ENCODE measurements at regions of chr10 and their contacts with region 1.

Region 1: DNA sequence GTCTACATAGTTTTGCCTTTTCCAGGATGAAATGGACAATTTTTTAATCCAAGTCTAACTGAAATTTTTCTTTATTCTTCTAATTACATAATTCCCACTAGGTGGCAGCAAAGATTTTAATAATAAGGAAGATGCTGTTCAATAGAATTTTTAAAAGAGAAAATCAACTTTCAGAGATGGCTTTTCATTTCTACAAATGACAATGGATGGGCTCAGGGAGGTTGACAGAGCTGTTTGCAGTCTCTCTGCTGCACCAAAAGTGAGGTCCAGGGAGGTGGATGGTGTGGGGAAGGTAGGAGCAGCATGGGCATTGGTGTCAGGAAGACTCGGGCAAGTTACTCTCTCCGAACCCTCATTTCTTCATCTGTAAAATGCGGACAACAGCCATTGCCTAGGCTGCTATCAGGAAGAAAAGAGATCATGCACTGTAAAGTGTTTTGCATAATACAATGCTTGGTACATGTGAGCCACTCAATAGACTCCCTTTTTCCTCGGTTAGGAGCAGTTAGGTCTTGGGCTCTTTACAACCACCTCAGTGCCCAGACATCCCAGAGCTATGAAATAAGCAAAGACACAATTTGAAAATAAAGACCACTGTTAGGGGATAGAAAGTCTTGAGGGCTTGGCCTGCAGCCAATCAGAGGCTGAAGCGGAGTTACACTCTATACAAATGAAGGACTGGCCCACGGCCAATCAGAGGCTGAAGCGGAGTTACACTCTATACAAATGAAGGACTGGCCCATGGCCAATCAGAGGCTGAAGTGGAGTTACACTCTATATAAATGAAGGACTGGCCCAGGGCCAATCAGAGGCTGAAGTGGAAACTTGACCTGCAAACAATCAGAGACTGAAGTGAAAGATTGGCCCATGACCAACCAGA is 107.1 kb downstream of the ABLIM1 start:
- DNase-seq: peak; percentile 32
- ATAC-seq: no peak
- H3K4me3 ChIP-seq: no peak overlapping the region
- H3K27ac ChIP-seq: no peak overlapping the region
- H3K4me1 ChIP-seq: no peaks in the 10 kb centered on the region; a peak in 1 of 4 replicates
- H3K27me3 ChIP-seq: no peaks in the 10 kb centered on the region
- CTCF ChIP-seq: peak; percentile 11 to 95 (median 78); a peak in 4 of 6 replicates
- POLR2A ChIP-seq: no peak
- RAD21 ChIP-seq: peak; percentile 91

Region 2: DNA sequence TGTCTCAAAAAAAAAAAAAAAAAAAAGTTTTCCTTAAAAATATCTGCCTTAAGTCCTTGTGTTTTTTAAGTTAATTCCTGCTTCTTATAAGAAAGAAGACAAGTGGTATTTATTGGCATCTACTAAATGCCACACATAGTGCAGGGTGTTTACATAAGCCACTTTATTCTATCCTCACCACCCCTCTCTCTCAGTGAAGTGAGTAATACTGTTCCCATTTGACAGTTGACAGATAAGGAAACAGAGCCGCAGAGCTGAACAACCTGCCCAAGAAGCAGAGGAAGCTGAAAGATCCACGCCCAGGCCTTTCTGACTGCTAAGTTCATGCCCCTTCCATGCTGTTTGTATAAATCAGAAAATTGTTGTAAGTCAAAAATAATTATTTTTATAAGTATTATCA is 53.0 kb after region 1 on chr10:
- CTCF ChIA-PET with region 1: no interaction called
- POLR2A ChIA-PET with region 1: no interaction called
- RAD21 ChIA-PET with region 1: no interaction called
- intact Hi-C with region 1: no loop called
- DNase-seq: no peak
- ATAC-seq: no peak
- H3K4me3 ChIP-seq: no peak overlapping the region
- H3K27ac ChIP-seq: no peak overlapping the region
- H3K4me1 ChIP-seq: peaks cover 0 to 7% of the 10 kb centered on the region in 2 experiments; a peak in 1 of 4 replicates
- H3K27me3 ChIP-seq: no peaks in the 10 kb centered on the region
- CTCF ChIP-seq: no peak
- POLR2A ChIP-seq: no peak
- RAD21 ChIP-seq: no peak

Region 3: DNA sequence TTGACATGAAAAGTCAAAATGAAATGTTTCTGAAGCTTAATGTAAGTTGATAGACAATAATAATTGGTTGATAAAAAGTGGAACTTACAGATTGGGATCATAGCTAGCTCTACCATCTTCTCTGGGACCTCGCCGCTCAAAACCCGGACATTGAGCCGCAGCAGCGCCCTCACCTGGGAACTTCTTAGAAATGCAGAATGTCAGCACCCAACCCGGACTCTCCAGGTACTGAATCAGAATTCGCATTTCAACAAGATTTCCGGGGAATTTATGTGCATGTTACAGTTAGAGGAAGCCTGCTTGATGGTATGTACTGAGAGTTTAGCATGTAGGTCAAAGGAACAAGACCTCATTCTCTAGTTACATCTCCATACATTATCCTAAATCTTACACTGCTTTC is 143.8 kb after region 1 on chr10:
- CTCF ChIA-PET with region 1: interaction called, 44 read pairs
- POLR2A ChIA-PET with region 1: no interaction called
- RAD21 ChIA-PET with region 1: interaction called, 4 to 8 read pairs
- intact Hi-C with region 1: loop called (anchors 1 kb)
- DNase-seq: peak; percentile 61
- ATAC-seq: peak; percentile 97
- H3K4me3 ChIP-seq: no peak overlapping the region
- H3K27ac ChIP-seq: no peak overlapping the region
- H3K4me1 ChIP-seq: peaks cover 16 to 18% of the 10 kb centered on the region in 2 experiments; a peak in 3 of 4 replicates
- H3K27me3 ChIP-seq: no peaks in the 10 kb centered on the region
- CTCF ChIP-seq: peak; percentile 86 to 97 (median 93)
- POLR2A ChIP-seq: no peak
- RAD21 ChIP-seq: peak; percentile 91

Region 4: DNA sequence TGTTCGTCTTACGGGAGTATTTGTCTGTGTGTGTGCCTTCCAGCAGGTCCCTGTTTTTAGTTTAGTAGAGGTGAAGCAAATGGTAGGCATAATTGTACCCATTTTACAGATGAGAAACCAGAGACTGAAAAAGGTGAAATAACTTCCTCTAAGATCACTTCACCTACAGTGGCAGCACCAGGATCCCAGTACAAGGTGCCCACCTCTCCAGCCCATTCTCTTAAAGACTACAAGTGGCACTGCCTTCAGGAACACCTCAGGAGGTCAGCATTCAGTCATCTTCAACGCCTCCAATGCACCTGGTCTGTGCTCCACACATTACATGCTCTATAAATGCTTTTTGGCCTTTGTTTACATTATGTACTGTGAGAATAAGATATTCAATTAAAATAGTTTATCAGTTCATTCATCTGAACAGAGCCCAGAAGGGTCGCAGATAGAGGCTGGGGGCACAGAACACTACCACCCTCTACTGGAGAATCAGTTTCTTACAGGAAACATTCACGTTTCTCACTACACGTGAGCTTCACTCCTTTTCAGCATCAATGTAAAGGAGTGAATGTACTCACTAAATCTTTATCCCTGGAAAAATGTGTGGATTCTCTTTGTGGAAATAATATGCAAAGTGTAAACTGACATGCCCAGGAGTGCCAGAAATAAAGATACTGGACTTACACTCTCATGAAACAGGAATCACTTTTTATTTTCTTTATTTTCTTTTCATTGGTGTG is 152.5 kb after region 1 on chr10:
- CTCF ChIA-PET with region 1: interaction called, 11 read pairs
- POLR2A ChIA-PET with region 1: no interaction called
- RAD21 ChIA-PET with region 1: interaction called in 1 of 2 experiments, 7 read pairs
- intact Hi-C with region 1: loop called (anchors 1 kb)
- DNase-seq: no peak
- ATAC-seq: peak; percentile 90
- H3K4me3 ChIP-seq: no peak overlapping the region
- H3K27ac ChIP-seq: no peak overlapping the region
- H3K4me1 ChIP-seq: peaks cover 0 to 4% of the 10 kb centered on the region in 2 experiments; a peak in 2 of 4 replicates
- H3K27me3 ChIP-seq: no peaks in the 10 kb centered on the region
- CTCF ChIP-seq: peak; percentile 84 to 95 (median 88)
- POLR2A ChIP-seq: no peak
- RAD21 ChIP-seq: peak; percentile 90

Region 5: GRCh38 chr10:114779803-114780609 is 229.0 kb after region 1 on chr10:
- CTCF ChIA-PET with region 1: interaction called, 43 read pairs
- POLR2A ChIA-PET with region 1: no interaction called
- RAD21 ChIA-PET with region 1: no interaction called
- intact Hi-C with region 1: no loop called
- DNase-seq: peak; percentile 76
- ATAC-seq: peak; percentile 82
- H3K4me3 ChIP-seq: peak overlapping the region in 1 of 2 experiments; percentile 14; a peak in 1 of 4 replicates
- H3K27ac ChIP-seq: peak overlapping the region; percentile 49
- H3K4me1 ChIP-seq: peaks cover 26 to 27% of the 10 kb centered on the region in 2 experiments
- H3K27me3 ChIP-seq: no peaks in the 10 kb centered on the region
- CTCF ChIP-seq: no peak
- POLR2A ChIP-seq: no peak
- RAD21 ChIP-seq: peak; percentile 39; the same call in 1 of the 2 replicates

Region 6: GRCh38 chr10:114876602-114877300 is 325.8 kb after region 1 on chr10:
- CTCF ChIA-PET with region 1: no interaction called
- POLR2A ChIA-PET with region 1: no interaction called
- RAD21 ChIA-PET with region 1: no interaction called
- intact Hi-C with region 1: loop called (anchors 2 kb)
- DNase-seq: peak; percentile 74
- ATAC-seq: peak; percentile 94
- H3K4me3 ChIP-seq: no peak overlapping the region
- H3K27ac ChIP-seq: no peak overlapping the region
- H3K4me1 ChIP-seq: peaks cover 0 to 13% of the 10 kb centered on the region in 2 experiments; a peak in 1 of 4 replicates
- H3K27me3 ChIP-seq: no peaks in the 10 kb centered on the region
- CTCF ChIP-seq: peak; percentile 95 to 97 (median 96)
- POLR2A ChIP-seq: no peak
- RAD21 ChIP-seq: peak; percentile 96

Region 7: DNA sequence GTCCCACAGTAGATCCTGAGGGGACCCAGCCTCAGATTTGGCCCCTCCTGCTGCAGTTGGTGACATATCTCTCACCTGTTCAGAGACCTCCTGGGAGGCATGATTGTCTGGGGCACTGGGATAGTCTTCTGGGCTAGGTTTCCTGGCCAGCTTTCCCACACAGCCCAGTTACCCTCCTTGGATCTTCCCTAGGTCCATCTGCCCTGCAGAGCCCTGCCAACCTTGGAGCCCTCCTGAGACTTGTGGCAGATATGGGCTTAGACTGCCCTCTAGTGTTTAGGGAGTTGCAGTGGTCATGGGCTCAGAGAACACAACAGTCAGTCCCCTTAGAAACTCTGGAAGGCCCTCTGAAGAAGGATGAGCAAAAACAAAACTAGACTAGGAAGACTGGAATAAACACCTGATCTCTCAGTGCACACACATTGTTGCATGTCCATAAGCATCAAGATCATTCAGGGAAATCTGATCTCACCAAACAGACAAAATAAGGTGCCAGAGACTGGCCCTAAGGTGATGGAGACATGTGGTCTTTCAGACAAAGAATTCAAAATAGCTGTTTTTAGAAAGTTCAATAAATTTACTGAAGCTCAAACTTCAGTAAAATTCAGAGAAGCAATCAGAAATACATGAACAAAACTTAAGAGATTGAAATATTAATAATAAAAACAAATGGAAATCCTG is 866.7 kb after region 1 on chr10:
- CTCF ChIA-PET with region 1: no interaction called
- POLR2A ChIA-PET with region 1: no interaction called
- RAD21 ChIA-PET with region 1: no interaction called
- intact Hi-C with region 1: loop called (anchors 10 kb)
- DNase-seq: peak; percentile 66
- ATAC-seq: peak; percentile 100
- H3K4me3 ChIP-seq: no peak overlapping the region
- H3K27ac ChIP-seq: no peak overlapping the region
- H3K4me1 ChIP-seq: no peaks in the 10 kb centered on the region
- H3K27me3 ChIP-seq: peaks cover 16% of the 10 kb centered on the region; the same call in 1 of the 2 replicates
- CTCF ChIP-seq: peak; percentile 85 to 95 (median 93)
- POLR2A ChIP-seq: no peak
- RAD21 ChIP-seq: peak; percentile 92